ENCODE measurements at regions of chr3 and their contacts with region 1.

Region 1: GRCh38 chr3:196568246-196569002 is at the starts of genes FBXO45 and WDR53:
- DNase-seq: peak; percentile 98
- ATAC-seq: peak; percentile 93
- H3K4me3 Mint-ChIP-seq: peak within 1 kb of the TSS; percentile 88
- H3K27ac Mint-ChIP-seq: peak within 1 kb of the TSS; percentile 93
- H3K4me1 Mint-ChIP-seq: peaks cover 45% of the 10 kb centered on the region
- H3K27me3 Mint-ChIP-seq: no peaks in the 10 kb centered on the region
- total RNA-seq, gene FBXO45: 12.7 to 16.2 TPM
- total RNA-seq, gene WDR53: 12.8 to 21.4 TPM

Region 2: GRCh38 chr3:196287440-196288148 is 280.8 kb before region 1 on chr3 and contains the start of gene PCYT1A:
- CTCF ChIA-PET with region 1: no interaction called
- POLR2A ChIA-PET with region 1: no interaction called
- intact Hi-C with region 1: loop called in 1 of 2 experiments (anchors 1 kb)
- DNase-seq: peak; percentile 86
- ATAC-seq: peak; percentile 90
- H3K4me3 Mint-ChIP-seq: peak within 1 kb of the TSS; percentile 98
- H3K27ac Mint-ChIP-seq: peak within 1 kb of the TSS; percentile 97
- H3K4me1 Mint-ChIP-seq: peaks cover 34% of the 10 kb centered on the region
- H3K27me3 Mint-ChIP-seq: no peaks in the 10 kb centered on the region
- total RNA-seq, gene PCYT1A: 41.8 to 47.1 TPM

Region 3: DNA sequence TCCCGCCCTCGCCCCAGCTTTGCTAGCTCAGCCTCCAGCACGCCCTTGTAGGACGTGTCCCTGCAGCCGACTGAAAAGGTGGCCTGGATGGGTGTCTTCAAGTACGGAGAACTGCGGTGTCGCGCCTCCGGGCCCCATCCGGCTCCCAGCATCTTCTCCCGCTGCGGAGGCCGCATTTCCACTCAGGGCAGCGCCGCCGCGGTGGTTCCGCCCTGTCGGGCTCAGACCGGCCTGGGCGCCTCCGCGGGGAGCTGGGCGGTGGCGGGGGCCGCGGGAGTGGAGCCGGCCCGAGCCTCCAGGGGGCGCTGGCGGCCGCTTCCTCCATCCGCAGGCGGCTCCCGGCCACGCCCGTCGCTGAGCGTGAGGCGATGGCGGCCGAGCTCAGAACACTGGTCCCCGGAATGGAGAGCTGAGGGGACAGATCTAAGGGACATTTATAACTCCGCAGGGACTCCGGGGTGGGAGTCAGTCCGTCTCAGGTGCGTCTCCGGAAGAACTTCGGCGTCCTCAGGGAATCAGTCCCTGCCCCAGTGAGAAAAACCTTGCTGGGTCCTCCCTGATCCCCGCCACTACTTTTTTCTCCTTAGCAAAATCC is 39.7 kb before region 1 on chr3:
- CTCF ChIA-PET with region 1: interaction called, 16 read pairs
- POLR2A ChIA-PET with region 1: interaction called, 8 read pairs
- intact Hi-C with region 1: loop called (anchors 2 kb)
- DNase-seq: peak; percentile 93
- ATAC-seq: peak; percentile 94
- H3K4me3 Mint-ChIP-seq: peak overlapping the region; percentile 74
- H3K27ac Mint-ChIP-seq: peak overlapping the region; percentile 72
- H3K4me1 Mint-ChIP-seq: peaks cover 8% of the 10 kb centered on the region
- H3K27me3 Mint-ChIP-seq: peaks cover 2% of the 10 kb centered on the region

Region 4: GRCh38 chr3:196711838-196712513 is 143.6 kb after region 1 on chr3 and contains the starts of genes CEP19 and PIGX:
- CTCF ChIA-PET with region 1: no interaction called
- POLR2A ChIA-PET with region 1: interaction called, 3 read pairs
- intact Hi-C with region 1: loop called in 1 of 2 experiments (anchors 1 kb)
- DNase-seq: peak; percentile 94
- ATAC-seq: peak; percentile 87
- H3K4me3 Mint-ChIP-seq: peak within 1 kb of the TSS; percentile 83
- H3K27ac Mint-ChIP-seq: peak within 1 kb of the TSS; percentile 96
- H3K4me1 Mint-ChIP-seq: peaks cover 33% of the 10 kb centered on the region
- H3K27me3 Mint-ChIP-seq: no peaks in the 10 kb centered on the region
- total RNA-seq, gene CEP19: 4.7 to 5.6 TPM
- total RNA-seq, gene PIGX: 37.8 to 42.2 TPM

Region 5: GRCh38 chr3:196969660-196970546 is 401.5 kb after region 1 on chr3:
- CTCF ChIA-PET with region 1: no interaction called
- POLR2A ChIA-PET with region 1: no interaction called
- intact Hi-C with region 1: loop called in 1 of 2 experiments (anchors 1 kb)
- DNase-seq: peak; percentile 80
- ATAC-seq: peak; percentile 65
- H3K4me3 Mint-ChIP-seq: peak overlapping the region; percentile 63
- H3K27ac Mint-ChIP-seq: peak overlapping the region; percentile 31
- H3K4me1 Mint-ChIP-seq: peaks cover 15% of the 10 kb centered on the region
- H3K27me3 Mint-ChIP-seq: peaks cover 11% of the 10 kb centered on the region

Region 6: GRCh38 chr3:197456261-197457091 is 888.1 kb after region 1 on chr3:
- CTCF ChIA-PET with region 1: no interaction called
- POLR2A ChIA-PET with region 1: no interaction called
- intact Hi-C with region 1: no loop called
- DNase-seq: peak; percentile 77
- ATAC-seq: peak; percentile 55
- H3K4me3 Mint-ChIP-seq: peak overlapping the region; percentile 76
- H3K27ac Mint-ChIP-seq: peak overlapping the region; percentile 93
- H3K4me1 Mint-ChIP-seq: peaks cover 21% of the 10 kb centered on the region
- H3K27me3 Mint-ChIP-seq: peaks cover 6% of the 10 kb centered on the region